Common myeloid progenitor, CD34-positive (primary cell): ENCODE measurements at regions of chr11 and their contacts with region 1.

Region 1: GRCh38 chr11:120108154-120108865 is 29.6 kb downstream of the TRIM29 start:
- DNase-seq: peak; percentile 40 to 66 (median 65)
- H3K4me3 ChIP-seq: no peak overlapping the region
- H3K27ac ChIP-seq: no peak overlapping the region
- H3K4me1 ChIP-seq: no peaks in the 10 kb centered on the region
- H3K27me3 ChIP-seq: peaks cover 0 to 17% (median 0%) of the 10 kb centered on the region in 5 experiments

Region 2: GRCh38 chr11:119666463-119667131 is 441.7 kb before region 1 on chr11:
- CTCF ChIA-PET with region 1: interaction called, 45 read pairs
- POLR2A ChIA-PET with region 1: no interaction called
- DNase-seq: peak; percentile 29 to 57 (median 41)
- H3K4me3 ChIP-seq: no peak overlapping the region
- H3K27ac ChIP-seq: no peak overlapping the region
- H3K4me1 ChIP-seq: no peaks in the 10 kb centered on the region
- H3K27me3 ChIP-seq: peaks cover 0 to 2% (median 0%) of the 10 kb centered on the region in 5 experiments

Region 3: DNA sequence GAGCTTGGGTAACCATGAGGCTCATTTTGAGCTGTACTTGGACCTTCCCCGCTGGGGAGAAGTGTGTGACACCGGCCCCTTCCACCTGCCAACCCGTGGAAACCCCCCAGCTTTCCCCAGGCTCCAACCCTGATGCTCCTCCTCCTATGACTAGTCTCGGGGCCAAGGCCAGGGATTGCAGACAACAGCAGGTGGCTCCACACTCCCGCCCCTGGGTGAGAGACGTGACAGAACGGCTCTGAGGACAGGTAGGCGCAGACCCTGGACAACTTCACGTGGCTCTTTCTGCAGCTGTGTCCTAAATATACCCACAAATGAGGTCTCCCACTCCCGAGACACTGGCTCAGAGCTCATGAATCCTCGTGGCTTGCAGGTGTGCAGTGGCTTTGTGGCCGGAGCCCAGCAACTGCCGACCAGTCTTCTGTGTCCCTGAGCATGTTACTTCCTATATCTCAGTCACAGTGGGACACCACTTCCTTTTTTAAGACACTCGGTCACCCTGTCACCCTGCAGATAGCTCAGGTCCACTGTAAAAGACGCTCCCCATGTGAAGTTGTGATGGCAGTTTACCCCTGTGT is 434.5 kb before region 1 on chr11:
- CTCF ChIA-PET with region 1: interaction called, 45 read pairs
- POLR2A ChIA-PET with region 1: no interaction called
- DNase-seq: peak; percentile 48 to 86 (median 82)
- H3K4me3 ChIP-seq: peak overlapping the region in 1 of 7 experiments; percentile 23
- H3K27ac ChIP-seq: no peak overlapping the region
- H3K4me1 ChIP-seq: peaks cover 0 to 25% (median 20%) of the 10 kb centered on the region in 4 experiments
- H3K27me3 ChIP-seq: peaks cover 0 to 3% (median 0%) of the 10 kb centered on the region in 5 experiments

Region 4: DNA sequence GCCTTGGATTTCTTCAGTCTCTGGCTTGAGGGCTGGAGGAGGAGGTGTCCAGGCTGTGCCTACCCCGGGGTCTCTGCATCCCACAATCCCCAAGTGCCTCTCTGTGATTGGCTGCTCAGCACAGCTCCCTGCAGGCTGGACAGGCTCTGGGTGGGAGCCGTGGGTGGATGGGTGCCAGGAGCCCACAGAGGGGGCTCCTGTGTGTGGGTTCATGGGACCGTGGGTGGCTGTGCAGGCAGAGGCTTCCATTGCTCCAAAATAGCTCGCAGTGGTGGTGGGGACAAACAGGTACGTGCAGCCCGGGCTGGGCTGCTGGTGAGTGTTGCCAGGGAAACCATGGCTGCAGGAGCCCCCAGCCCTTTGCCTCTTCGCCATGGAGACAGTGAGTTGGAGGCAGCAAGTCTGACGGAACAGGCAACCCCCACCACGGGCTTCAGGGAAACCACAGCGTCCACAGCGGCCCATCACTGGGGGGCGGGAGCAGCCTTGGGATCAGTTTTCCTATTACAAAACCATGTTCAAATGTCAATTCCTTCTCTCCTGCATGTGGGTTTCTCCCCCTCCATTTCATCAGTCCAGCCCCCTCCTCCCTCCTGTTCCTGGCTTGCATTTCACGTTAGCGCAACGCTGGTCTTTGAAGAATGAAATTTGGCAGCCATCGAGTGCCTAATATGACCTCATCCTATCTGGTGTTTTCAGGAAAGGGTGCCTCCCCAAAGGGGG is 125.6 kb before region 1 on chr11:
- CTCF ChIA-PET with region 1: no interaction called
- POLR2A ChIA-PET with region 1: no interaction called
- DNase-seq: no peak
- H3K4me3 ChIP-seq: no peak overlapping the region
- H3K27ac ChIP-seq: no peak overlapping the region
- H3K4me1 ChIP-seq: no peaks in the 10 kb centered on the region
- H3K27me3 ChIP-seq: peaks cover 0 to 63% (median 10%) of the 10 kb centered on the region in 5 experiments

Region 5: GRCh38 chr11:120055646-120056045 is 52.7 kb before region 1 on chr11:
- CTCF ChIA-PET with region 1: no interaction called
- POLR2A ChIA-PET with region 1: no interaction called
- DNase-seq: no peak
- H3K4me3 ChIP-seq: no peak overlapping the region
- H3K27ac ChIP-seq: no peak overlapping the region
- H3K4me1 ChIP-seq: no peaks in the 10 kb centered on the region
- H3K27me3 ChIP-seq: peaks cover 0 to 15% (median 7%) of the 10 kb centered on the region in 5 experiments

Region 6: DNA sequence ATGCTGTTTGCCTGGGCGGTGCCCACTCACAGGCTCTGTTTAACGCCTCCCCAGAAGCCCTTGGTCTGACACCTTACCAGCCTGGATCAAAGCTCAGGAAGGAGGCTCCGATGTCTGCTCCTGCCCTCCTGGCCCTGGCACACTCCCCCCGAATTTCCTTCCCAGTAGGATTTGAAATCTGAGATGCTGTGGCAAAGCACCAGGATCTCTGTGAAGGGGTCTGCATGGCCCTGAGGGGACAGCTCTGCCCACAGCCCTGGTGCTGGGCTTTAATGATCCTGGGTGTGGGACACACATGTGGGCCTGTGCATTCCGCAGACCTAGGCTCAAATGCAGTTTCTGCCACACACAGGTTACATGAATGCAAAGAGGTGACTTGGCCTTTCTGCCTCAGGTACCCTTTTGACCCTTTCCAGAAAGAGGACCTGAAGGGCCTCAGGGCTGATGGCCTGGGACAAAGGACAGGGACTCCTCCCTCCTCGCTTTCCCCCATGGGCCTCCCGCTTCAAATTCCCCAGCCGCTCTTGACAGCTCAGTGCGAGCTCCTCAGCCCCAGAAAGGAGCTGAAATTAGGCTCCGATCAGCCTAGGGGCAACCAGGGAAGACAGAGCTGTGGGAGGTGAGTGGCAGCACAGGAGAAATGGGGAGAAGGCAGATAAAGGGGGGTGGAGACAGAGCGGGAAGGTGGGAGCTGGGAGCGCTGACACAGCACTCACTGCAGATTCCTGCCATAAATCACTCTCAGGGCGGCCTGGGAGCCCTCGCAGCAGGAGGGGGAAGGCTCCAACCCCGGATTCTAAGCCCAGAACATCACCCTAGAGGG is 11.7 kb before region 1 on chr11:
- CTCF ChIA-PET with region 1: interaction called, 23 read pairs
- POLR2A ChIA-PET with region 1: no interaction called
- DNase-seq: peak; percentile 25 to 76 (median 29)
- H3K4me3 ChIP-seq: peak overlapping the region in 1 of 7 experiments; percentile 17
- H3K27ac ChIP-seq: no peak overlapping the region
- H3K4me1 ChIP-seq: peaks cover 0 to 29% (median 4%) of the 10 kb centered on the region in 4 experiments
- H3K27me3 ChIP-seq: no peaks in the 10 kb centered on the region